CD4-positive, alpha-beta T cell (primary cell): ENCODE measurements at regions of chr3 and their contacts with region 1.

Region 1: DNA sequence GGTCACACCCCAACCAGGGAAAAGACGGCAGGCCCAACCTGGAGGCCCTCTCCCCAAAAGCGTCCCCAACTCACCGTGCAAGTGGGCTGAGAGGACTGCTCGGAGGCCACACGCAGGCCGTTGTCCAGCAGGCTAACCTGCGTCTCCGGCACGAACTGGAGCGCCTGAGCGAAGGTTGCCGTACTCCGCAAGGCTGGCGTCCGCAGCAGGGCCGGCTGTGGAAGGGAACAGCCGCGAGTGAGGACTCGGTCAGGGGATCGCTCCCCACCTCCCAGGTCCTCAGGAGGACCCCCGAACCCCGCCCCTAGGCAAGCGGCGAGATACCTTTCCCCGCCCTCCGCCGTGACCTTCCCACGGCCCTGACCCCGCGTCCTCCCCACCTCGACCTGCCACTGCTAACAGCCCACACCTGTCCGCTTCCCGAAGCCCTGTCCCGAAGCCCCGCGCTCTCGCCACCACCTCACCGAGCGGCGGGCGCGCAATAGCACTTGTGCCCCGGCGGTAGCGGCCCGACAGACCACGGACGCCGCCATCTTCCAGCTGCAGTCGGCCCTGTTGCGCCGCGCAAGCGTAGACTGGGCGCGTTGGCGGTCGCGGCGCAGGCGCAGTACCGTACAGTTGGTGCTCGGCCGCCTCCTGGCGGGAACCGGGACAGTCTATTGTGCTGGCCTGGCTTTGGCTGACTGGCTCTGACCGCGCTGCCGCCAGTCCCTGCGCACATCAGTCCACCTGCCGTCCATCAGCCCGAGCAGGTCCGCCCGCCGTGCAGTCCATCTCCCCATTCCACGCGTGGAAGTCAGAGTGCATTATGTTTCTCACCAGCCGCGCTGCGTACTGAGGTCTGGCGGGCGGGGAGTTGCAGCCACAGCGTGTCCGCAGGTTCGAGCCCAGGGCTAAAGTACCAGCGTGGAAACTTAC is at the start of gene UQCRC1:
- DNase-seq: peak; percentile 85 to 97 (median 91)
- ATAC-seq: peak; percentile 99
- H3K4me3 ChIP-seq: peak within 1 kb of the TSS; percentile 99
- H3K4me3 Mint-ChIP-seq: peak within 1 kb of the TSS; percentile 100
- H3K27ac ChIP-seq: peak within 1 kb of the TSS; percentile 55 to 60
- H3K27ac Mint-ChIP-seq: peak within 1 kb of the TSS; percentile 97
- H3K4me1 ChIP-seq: peaks cover 22% of the 10 kb centered on the region
- H3K4me1 Mint-ChIP-seq: peaks cover 21% of the 10 kb centered on the region
- H3K27me3 ChIP-seq: no peaks in the 10 kb centered on the region
- H3K27me3 Mint-ChIP-seq: no peaks in the 10 kb centered on the region
- CTCF ChIP-seq: peak; percentile 94
- total RNA-seq, gene UQCRC1: 74.1 to 75.5 TPM

Region 2: GRCh38 chr3:47282424-47283192 is 1326.7 kb before region 1 on chr3 and contains the starts of genes KIF9 and KLHL18:
- CTCF ChIA-PET with region 1: no interaction called
- POLR2A ChIA-PET with region 1: no interaction called
- intact Hi-C with region 1: loop called in 1 of 2 experiments (anchors 5 kb)
- DNase-seq: peak; percentile 92 to 99 (median 95)
- ATAC-seq: peak; percentile 83
- H3K4me3 ChIP-seq: peak within 1 kb of the TSS; percentile 78
- H3K4me3 Mint-ChIP-seq: peak within 1 kb of the TSS; percentile 98
- H3K27ac ChIP-seq: peak within 1 kb of the TSS; percentile 95 to 98
- H3K27ac Mint-ChIP-seq: peak within 1 kb of the TSS; percentile 99
- H3K4me1 ChIP-seq: peaks cover 45% of the 10 kb centered on the region
- H3K4me1 Mint-ChIP-seq: peaks cover 42% of the 10 kb centered on the region
- H3K27me3 ChIP-seq: no peaks in the 10 kb centered on the region
- H3K27me3 Mint-ChIP-seq: no peaks in the 10 kb centered on the region
- CTCF ChIP-seq: no peak
- total RNA-seq, gene KIF9: 8.0 to 9.2 TPM
- total RNA-seq, gene KLHL18: 43.3 to 43.7 TPM

Region 3: GRCh38 chr3:48400824-48401433 is 208.4 kb before region 1 on chr3:
- CTCF ChIA-PET with region 1: interaction called, 4 read pairs
- POLR2A ChIA-PET with region 1: no interaction called
- intact Hi-C with region 1: loop called (anchors 1 to 2 kb)
- DNase-seq: peak; percentile 45 to 88 (median 56)
- ATAC-seq: peak; percentile 82
- H3K4me3 ChIP-seq: no peak overlapping the region
- H3K4me3 Mint-ChIP-seq: no peak overlapping the region
- H3K27ac ChIP-seq: no peak overlapping the region
- H3K27ac Mint-ChIP-seq: no peak overlapping the region
- H3K4me1 ChIP-seq: no peaks in the 10 kb centered on the region
- H3K4me1 Mint-ChIP-seq: no peaks in the 10 kb centered on the region
- H3K27me3 ChIP-seq: no peaks in the 10 kb centered on the region
- H3K27me3 Mint-ChIP-seq: peaks cover 1% of the 10 kb centered on the region
- CTCF ChIP-seq: peak; percentile 93

Region 4: DNA sequence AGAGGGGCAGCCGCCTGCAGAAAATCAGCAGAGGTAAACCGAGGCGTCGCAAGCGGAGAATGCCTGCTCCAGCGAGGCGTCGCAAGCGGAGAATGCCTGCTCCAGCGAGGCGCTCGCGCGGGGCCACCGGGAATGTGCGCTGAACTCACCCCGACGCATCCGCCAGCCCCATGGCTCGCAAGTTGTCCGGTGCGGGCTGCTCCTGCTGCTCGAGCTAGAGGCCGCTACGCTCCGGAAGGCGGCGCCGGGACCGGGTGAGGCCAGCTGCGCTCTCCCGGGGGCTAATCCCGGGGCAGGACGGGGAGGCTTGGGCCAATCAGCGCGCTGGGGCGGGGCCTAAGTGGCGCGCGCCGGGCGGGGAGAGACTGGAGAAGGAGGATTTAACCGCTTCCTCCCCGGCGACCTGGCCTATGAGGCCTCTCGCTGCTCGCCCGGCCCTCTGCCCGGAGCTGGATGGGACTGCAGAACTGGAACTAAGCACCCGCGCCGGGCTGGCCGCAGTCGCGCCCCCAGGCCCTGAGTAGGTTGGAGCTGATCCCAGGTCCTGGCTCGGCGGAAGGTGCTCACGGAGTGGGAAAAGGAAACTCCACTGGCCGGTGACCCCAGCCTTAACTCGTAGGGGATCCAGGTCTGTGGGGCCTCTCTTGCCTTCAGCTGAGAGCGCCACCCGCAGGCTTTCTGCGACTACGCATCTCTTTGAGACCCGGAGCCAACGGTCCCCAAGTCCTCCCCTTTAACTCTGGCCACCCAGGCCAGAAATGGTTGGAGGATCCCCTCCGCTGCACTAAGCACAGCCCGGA is 26.1 kb after region 1 on chr3 and contains the start of gene SLC26A6:
- CTCF ChIA-PET with region 1: interaction called, 10 read pairs
- POLR2A ChIA-PET with region 1: interaction called, 6 read pairs
- intact Hi-C with region 1: loop called in 1 of 2 experiments (anchors 1 kb)
- DNase-seq: peak; percentile 80 to 95 (median 94)
- ATAC-seq: peak; percentile 98
- H3K4me3 ChIP-seq: peak within 1 kb of the TSS; percentile 87
- H3K4me3 Mint-ChIP-seq: peak within 1 kb of the TSS; percentile 88
- H3K27ac ChIP-seq: peak within 1 kb of the TSS in 1 of 2 donors; percentile 22
- H3K27ac Mint-ChIP-seq: no peak within 1 kb of the TSS
- H3K4me1 ChIP-seq: peaks cover 32% of the 10 kb centered on the region
- H3K4me1 Mint-ChIP-seq: peaks cover 19% of the 10 kb centered on the region
- H3K27me3 ChIP-seq: no peaks in the 10 kb centered on the region
- H3K27me3 Mint-ChIP-seq: no peaks in the 10 kb centered on the region
- CTCF ChIP-seq: no peak
- total RNA-seq, gene SLC26A6: 13.5 to 14.4 TPM